Naive thymus-derived CD8-positive, alpha-beta T cell (primary cell): ENCODE measurements at regions of chr17 and their contacts with region 1.

Region 1: DNA sequence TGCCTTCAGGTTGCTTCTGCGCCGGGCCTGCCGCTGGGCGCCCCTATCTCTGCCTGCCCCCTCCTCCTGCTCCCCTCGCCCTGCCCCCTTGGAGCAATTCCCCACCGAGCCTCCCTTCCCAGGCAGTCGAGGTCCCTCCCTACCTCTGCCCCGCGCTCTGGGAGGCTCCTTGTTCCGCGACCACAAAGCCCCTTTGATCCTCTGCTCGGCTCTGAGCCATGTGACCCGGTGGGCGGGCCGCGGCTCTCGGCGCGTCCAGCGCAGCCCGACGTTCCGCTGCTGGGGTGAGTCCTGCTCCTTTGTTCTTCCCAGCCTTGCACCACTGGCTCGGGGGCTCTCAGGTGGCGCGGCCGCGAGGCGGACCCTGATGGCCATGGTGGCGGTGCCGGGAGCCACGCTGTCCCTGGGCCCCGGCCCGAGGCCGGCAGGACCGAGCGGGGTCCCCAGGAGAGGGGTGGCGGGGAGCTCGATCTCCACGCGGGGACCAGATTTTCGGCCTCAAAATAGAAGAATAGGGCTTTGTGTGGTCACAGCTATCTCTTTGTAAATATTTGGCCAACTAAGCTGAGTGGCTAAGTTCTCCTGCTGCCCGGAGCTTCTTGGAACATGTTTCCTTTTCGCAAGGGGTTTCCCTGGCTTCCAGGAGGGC is 310.6 kb downstream of the SEC14L1 start:
- DNase-seq: peak in 9 of 10 donors; percentile 60 to 81 (median 68)
- ATAC-seq: peak; percentile 50 to 62
- H3K4me3 Mint-ChIP-seq: peak overlapping the region; percentile 91 to 98 (median 96)
- H3K27ac Mint-ChIP-seq: peak overlapping the region; percentile 92 to 99 (median 99)
- H3K4me1 Mint-ChIP-seq: peaks cover 28 to 67% (median 54%) of the 10 kb centered on the region in 4 donors
- H3K27me3 Mint-ChIP-seq: no peaks in the 10 kb centered on the region

Region 2: GRCh38 chr17:77465358-77466041 is 14.1 kb after region 1 on chr17:
- POLR2A ChIA-PET with region 1: interaction called, 5,369 read pairs
- DNase-seq: peak in 9 of 10 donors; percentile 70 to 92 (median 80)
- ATAC-seq: peak; percentile 82 to 95
- H3K4me3 Mint-ChIP-seq: peak overlapping the region; percentile 70 to 88 (median 81)
- H3K27ac Mint-ChIP-seq: peak overlapping the region; percentile 75 to 99 (median 94)
- H3K4me1 Mint-ChIP-seq: peaks cover 48 to 94% (median 92%) of the 10 kb centered on the region in 4 donors
- H3K27me3 Mint-ChIP-seq: no peaks in the 10 kb centered on the region